ENCODE measurements at regions of chr12 and their contacts with region 1.

Region 1: GRCh38 chr12:30806989-30807694 is 52.4 kb upstream of the CAPRIN2 start:
- DNase-seq: peak; percentile 83
- H3K4me3 ChIP-seq: no peak overlapping the region
- H3K27ac ChIP-seq: no peak overlapping the region
- H3K4me1 ChIP-seq: peaks cover 3% of the 10 kb centered on the region; the same call in 1 of the 2 replicates
- H3K27me3 ChIP-seq: no peaks in the 10 kb centered on the region

Region 2: DNA sequence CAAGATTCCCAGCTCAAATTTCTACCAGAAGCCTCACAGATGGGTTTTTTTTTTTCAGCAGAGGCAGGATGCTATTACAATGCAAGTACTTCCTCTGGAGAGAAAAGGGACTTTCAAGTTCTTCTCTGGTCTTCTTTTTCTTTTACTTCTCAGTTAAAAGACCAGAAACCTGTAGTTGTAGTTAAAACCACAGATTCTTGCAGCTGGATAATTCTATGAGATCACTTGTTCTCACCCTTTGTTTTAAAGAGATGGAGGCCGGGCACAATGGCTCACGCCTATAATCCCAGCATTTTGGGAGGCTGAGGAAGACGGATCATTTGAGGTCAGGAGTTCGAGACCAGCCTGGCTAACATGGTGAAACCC is 1262.1 kb before region 1 on chr12:
- in situ Hi-C with region 1: loop called (anchors 25 kb)
- DNase-seq: no peak
- H3K4me3 ChIP-seq: no peak overlapping the region
- H3K27ac ChIP-seq: no peak overlapping the region
- H3K4me1 ChIP-seq: peaks cover 31% of the 10 kb centered on the region
- H3K27me3 ChIP-seq: no peaks in the 10 kb centered on the region

Region 3: GRCh38 chr12:29782285-29782870 is 1024.8 kb before region 1 on chr12:
- in situ Hi-C with region 1: loop called (anchors 25 kb)
- DNase-seq: peak; percentile 89
- H3K4me3 ChIP-seq: peak overlapping the region; percentile 88
- H3K27ac ChIP-seq: peak overlapping the region; percentile 81
- H3K4me1 ChIP-seq: no peaks in the 10 kb centered on the region
- H3K27me3 ChIP-seq: no peaks in the 10 kb centered on the region

Region 4: GRCh38 chr12:30661210-30661609 is 145.9 kb before region 1 on chr12:
- in situ Hi-C with region 1: no loop called
- DNase-seq: no peak
- H3K4me3 ChIP-seq: no peak overlapping the region
- H3K27ac ChIP-seq: no peak overlapping the region
- H3K4me1 ChIP-seq: no peaks in the 10 kb centered on the region
- H3K27me3 ChIP-seq: no peaks in the 10 kb centered on the region